Activated naive CD4-positive, alpha-beta T cell treated with anti-CD3 and anti-CD28 coated beads for 36 hours (primary cell): ENCODE measurements at regions of chr19 and their contacts with region 1.

Region 1: DNA sequence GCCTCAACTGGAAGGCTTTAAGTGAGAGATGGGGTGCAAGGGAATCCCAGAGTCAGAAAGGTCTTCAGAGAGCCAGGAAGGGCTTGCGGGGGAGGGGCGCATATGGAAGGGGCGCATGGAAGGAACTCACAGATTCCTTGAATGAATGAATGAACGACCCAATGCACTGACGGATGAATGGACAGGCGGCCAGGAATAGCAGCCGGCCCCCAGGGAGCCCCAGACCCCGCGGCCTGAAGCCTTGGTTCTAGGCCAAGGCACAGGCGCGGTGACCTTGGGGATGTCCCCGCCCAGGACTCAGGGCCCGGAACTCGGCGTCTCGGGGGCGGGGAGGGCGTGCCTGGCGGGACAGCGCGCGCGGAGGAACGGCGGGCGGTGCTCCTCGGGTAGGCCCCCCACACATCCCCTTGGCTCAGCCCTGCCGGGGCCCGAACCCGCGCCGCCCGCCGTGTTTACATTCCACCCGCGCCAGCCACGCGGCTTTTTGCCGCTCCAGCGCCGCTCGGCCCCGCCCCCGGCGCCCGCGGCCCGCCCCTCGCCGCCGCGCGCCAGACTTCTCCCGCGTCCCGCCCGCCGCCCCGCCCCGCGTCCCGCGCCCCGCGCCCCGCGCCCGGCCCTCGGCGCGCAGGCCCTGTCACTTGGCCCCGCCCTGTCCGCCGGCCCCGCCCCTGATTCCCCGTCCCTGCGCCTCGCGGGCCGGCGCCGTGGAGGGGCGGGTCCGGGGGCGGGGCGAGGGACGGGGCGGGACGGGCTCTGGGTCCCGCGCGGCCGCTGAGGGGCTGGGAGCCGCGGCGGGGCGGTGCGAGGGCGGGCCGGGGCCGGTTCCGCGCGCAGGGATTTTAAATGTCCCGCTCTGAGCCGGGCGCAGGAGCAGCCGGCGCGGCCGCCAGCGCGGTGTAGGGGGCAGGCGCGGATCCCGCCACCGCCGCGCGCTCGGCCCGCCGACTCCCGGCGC is at the start of gene CCNE1:
- DNase-seq: peak; percentile 97
- H3K4me3 Mint-ChIP-seq: peak within 1 kb of the TSS; percentile 84
- H3K27ac Mint-ChIP-seq: peak within 1 kb of the TSS; percentile 88
- H3K4me1 Mint-ChIP-seq: peaks cover 11% of the 10 kb centered on the region
- H3K27me3 Mint-ChIP-seq: no peaks in the 10 kb centered on the region
- total RNA-seq, gene CCNE1: 31.2 to 34.1 TPM

Region 2: DNA sequence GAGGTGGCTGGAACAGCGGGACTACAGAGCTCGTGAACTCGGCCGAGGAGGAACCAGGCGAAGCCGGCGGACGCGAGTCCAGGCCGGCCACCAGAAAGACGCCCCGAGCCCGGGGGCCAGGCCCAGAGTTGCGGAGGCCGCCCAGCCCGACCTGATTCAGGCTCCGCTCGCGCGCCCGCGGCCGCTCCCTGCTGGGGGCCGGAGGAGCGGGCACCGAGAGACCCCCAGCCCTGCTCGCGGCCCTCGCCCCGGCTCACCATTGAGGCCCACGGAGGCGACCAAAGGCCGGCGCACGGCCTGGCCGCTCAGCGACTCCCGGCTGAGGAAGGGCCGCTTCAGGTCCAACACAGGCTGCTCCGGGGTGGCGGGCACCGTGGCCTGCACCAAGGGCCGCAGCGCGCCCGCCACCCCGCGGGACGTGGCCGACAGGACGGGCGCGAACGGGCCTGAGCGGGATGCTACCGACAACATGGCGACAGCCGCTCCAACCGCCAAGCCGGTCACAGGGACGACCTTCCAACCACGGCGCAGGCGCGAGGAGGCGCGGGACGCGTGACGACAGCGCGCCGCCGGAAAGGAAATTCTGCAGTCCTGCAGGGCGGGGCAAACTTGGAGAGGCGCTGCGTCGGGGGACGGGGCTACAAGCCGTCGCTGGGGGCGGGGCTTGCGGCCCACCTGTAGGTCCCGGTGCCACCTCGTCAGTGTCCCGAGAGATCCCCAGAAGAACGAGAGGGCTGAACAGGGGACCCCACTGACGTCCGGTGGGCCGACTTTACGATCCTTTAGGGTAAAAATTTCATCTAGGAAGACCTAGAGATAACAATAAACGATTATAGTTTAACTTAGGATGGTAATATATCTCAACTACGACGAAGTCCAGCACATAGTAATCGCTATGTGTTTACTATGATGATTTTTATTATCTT is 598.5 kb before region 1 on chr19 and contains the start of gene UQCRFS1:
- CTCF ChIA-PET with region 1: no interaction called
- intact Hi-C with region 1: loop called (anchors 2 kb)
- DNase-seq: peak; percentile 97
- H3K4me3 Mint-ChIP-seq: peak within 1 kb of the TSS; percentile 96
- H3K27ac Mint-ChIP-seq: peak within 1 kb of the TSS; percentile 96
- H3K4me1 Mint-ChIP-seq: peaks cover 40% of the 10 kb centered on the region
- H3K27me3 Mint-ChIP-seq: no peaks in the 10 kb centered on the region
- total RNA-seq, gene UQCRFS1: 46.8 to 47.6 TPM

Region 3: DNA sequence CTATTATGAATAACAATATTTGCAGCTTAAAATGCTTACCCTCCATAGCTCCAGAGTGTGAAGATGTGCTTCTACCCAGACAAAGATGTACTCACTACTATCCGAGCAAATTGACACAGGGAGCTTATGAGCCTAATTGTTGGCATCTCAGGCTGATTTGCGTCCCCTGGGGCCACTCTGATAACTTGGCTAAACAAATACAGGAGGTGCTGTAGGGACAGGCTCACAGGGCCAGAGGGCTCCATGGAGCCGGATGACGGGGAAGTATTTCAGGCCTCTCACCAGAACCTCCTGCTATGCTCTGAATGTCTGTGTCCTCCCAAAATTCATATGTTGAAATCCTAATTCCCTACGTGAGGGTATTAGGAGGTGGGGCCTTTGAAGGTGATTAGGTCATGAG is 69.6 kb before region 1 on chr19:
- CTCF ChIA-PET with region 1: no interaction called
- intact Hi-C with region 1: no loop called
- DNase-seq: no peak
- H3K4me3 Mint-ChIP-seq: no peak overlapping the region
- H3K27ac Mint-ChIP-seq: no peak overlapping the region
- H3K4me1 Mint-ChIP-seq: no peaks in the 10 kb centered on the region
- H3K27me3 Mint-ChIP-seq: no peaks in the 10 kb centered on the region

Region 4: GRCh38 chr19:29771708-29772414 is 39.5 kb before region 1 on chr19:
- CTCF ChIA-PET with region 1: interaction called, 5 read pairs
- intact Hi-C with region 1: loop called (anchors 5 kb)
- DNase-seq: peak; percentile 61
- H3K4me3 Mint-ChIP-seq: no peak overlapping the region
- H3K27ac Mint-ChIP-seq: no peak overlapping the region
- H3K4me1 Mint-ChIP-seq: no peaks in the 10 kb centered on the region
- H3K27me3 Mint-ChIP-seq: no peaks in the 10 kb centered on the region

Region 5: DNA sequence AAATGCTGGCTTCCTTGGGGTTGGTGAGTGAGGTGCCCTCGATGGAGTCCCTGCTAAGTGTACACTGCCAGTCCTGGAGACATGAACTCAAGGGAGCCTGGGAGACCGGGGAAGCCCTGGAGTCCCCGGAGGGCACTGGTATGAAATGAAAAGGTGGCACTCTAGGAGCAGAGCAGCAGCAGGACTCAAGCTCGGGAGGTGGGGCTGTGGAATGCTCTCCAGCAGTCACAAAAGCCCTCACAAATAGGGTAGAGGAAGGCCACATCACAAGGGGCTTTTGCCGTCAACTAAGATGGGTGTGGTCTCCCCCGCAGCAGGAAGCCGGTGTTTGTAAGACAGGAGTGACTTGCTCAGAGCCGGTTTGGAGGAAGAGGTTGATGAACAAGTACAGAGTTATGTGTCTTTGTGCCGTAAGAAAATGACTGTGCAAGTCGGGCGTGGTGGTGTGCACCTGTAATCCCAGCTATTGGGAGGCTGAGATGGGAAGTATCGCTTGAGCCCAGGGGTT is 19.7 kb after region 1 on chr19:
- CTCF ChIA-PET with region 1: no interaction called
- intact Hi-C with region 1: loop called (anchors 1 kb)
- DNase-seq: peak; percentile 87
- H3K4me3 Mint-ChIP-seq: peak overlapping the region; percentile 62
- H3K27ac Mint-ChIP-seq: peak overlapping the region; percentile 88
- H3K4me1 Mint-ChIP-seq: peaks cover 52% of the 10 kb centered on the region
- H3K27me3 Mint-ChIP-seq: no peaks in the 10 kb centered on the region